Activated CD4-positive, alpha-beta memory T cell treated with anti-CD3 and anti-CD28 coated beads, Interleukin-2, amount 10 ng/mL, durations not matched to agents 7 days and 5 days (primary cell): ENCODE measurements at regions of chr11 and their contacts with region 1.

Region 1: GRCh38 chr11:14544611-14545010 is 24.4 kb upstream of the PSMA1 start:
- DNase-seq: no peak
- H3K4me3 Mint-ChIP-seq: no peak overlapping the region
- H3K27ac Mint-ChIP-seq: peak overlapping the region; percentile 79
- H3K4me1 Mint-ChIP-seq: peaks cover 37% of the 10 kb centered on the region
- H3K27me3 Mint-ChIP-seq: no peaks in the 10 kb centered on the region

Region 2: GRCh38 chr11:14386895-14387480 is 157.6 kb before region 1 on chr11:
- CTCF ChIA-PET with region 1: no interaction called
- POLR2A ChIA-PET with region 1: no interaction called
- DNase-seq: no peak
- H3K4me3 Mint-ChIP-seq: no peak overlapping the region
- H3K27ac Mint-ChIP-seq: no peak overlapping the region
- H3K4me1 Mint-ChIP-seq: no peaks in the 10 kb centered on the region
- H3K27me3 Mint-ChIP-seq: peaks cover 18% of the 10 kb centered on the region

Region 3: GRCh38 chr11:14554959-14555358 is 10.3 kb after region 1 on chr11:
- CTCF ChIA-PET with region 1: interaction called, 4 read pairs
- POLR2A ChIA-PET with region 1: interaction called, 18 read pairs
- DNase-seq: no peak
- H3K4me3 Mint-ChIP-seq: peak overlapping the region; percentile 2
- H3K27ac Mint-ChIP-seq: peak overlapping the region; percentile 85
- H3K4me1 Mint-ChIP-seq: peaks cover 50% of the 10 kb centered on the region
- H3K27me3 Mint-ChIP-seq: no peaks in the 10 kb centered on the region